GM12878 (cell line): ENCODE measurements at regions of chr12 and their contacts with region 1.

Region 1: GRCh38 chr12:130838951-130839769 is at the start of gene STX2:
- DNase-seq: peak; percentile 30
- ATAC-seq: peak; percentile 92
- H3K4me3 ChIP-seq: peak within 1 kb of the TSS; percentile 87
- H3K27ac ChIP-seq: no peak within 1 kb of the TSS; the same call in 1 of the 2 replicates
- H3K4me1 ChIP-seq: peaks cover 5% of the 10 kb centered on the region
- H3K27me3 ChIP-seq: no peaks in the 10 kb centered on the region
- CTCF ChIP-seq: no peak
- EP300 ChIP-seq: no peak
- POLR2A ChIP-seq: no peak
- RAD21 ChIP-seq: no peak
- polyA plus RNA-seq, gene STX2: 6.0 to 7.8 TPM

Region 2: DNA sequence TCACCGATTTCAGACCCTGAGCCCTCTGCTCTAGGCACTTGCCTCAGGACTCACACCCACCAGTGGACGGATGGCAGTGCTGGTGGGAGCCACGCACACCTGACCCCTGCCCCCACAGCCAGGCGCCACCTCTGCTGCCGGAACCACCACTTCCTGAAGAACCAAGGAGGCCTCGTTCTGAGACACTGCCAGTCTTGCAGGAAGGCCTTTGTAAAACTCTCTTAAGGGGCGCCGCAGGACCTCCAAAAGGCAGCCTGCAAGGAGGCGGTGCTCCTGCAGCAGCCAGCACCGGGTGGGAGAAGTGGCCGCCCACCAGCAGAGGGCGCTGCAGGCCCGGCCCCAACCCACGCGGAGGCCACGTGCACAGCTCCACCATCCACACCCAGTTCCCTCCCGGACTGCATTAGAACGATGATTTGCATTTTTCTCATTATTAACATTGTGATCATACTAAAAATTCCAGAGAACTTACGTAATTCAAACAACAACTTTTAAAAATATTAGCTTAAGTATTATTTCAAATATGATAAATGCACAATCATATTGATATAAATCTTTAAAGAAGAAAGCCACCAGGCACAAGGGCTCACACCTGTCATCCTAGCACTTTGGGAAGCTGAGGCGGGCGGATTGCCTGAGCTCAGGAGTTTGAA is 12.9 kb before region 1 on chr12:
- CTCF ChIA-PET with region 1: interaction called, 33 read pairs
- POLR2A ChIA-PET with region 1: no interaction called
- RAD21 ChIA-PET with region 1: no interaction called
- SMC1A ChIA-PET with region 1: interaction called, 4 read pairs
- in situ Hi-C with region 1: no loop called
- intact Hi-C with region 1: no loop called
- DNase-seq: no peak
- ATAC-seq: peak; percentile 95
- H3K4me3 ChIP-seq: no peak overlapping the region
- H3K27ac ChIP-seq: no peak overlapping the region
- H3K4me1 ChIP-seq: no peaks in the 10 kb centered on the region; the same call in 1 of the 2 replicates
- H3K27me3 ChIP-seq: no peaks in the 10 kb centered on the region
- CTCF ChIP-seq: peak; percentile 49 to 81 (median 69)
- EP300 ChIP-seq: no peak
- POLR2A ChIP-seq: no peak
- RAD21 ChIP-seq: peak; percentile 37; the same call in 1 of the 2 replicates

Region 3: DNA sequence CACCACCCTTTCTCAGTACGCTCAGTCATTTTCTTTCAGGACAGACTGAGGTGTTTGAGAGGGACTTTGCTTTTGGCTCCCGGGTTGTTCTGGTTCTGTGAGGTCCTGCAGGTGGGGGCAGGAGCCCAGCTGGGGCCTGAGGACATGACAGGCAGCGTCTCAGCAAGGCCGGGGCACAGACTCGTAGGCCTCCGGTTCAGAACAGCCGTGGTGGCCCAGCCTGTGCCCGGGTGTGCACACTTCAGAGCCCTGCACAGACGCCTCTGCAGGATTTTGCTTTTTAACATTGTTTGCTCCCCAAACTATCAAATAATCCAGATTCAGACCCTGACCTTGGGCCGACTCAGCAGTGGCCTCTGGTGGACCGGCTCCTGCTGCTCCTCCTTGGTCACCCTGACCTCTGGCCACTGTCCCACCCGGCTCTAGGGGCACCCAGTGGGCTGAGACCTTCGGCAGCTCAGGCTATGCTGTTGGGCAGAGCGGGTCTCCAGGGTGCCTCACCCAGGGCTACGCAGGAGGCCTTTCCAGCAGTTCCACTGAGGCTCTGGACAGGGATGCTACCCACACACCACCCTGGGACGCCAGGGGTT is 179.7 kb after region 1 on chr12:
- CTCF ChIA-PET with region 1: no interaction called
- POLR2A ChIA-PET with region 1: no interaction called
- RAD21 ChIA-PET with region 1: no interaction called
- SMC1A ChIA-PET with region 1: no interaction called
- in situ Hi-C with region 1: no loop called
- intact Hi-C with region 1: no loop called
- DNase-seq: no peak
- ATAC-seq: no peak; the same call in 2 of the 3 replicates
- H3K4me3 ChIP-seq: no peak overlapping the region
- H3K27ac ChIP-seq: no peak overlapping the region
- H3K4me1 ChIP-seq: no peaks in the 10 kb centered on the region
- H3K27me3 ChIP-seq: no peaks in the 10 kb centered on the region
- CTCF ChIP-seq: no peak
- EP300 ChIP-seq: no peak
- POLR2A ChIP-seq: no peak
- RAD21 ChIP-seq: no peak

Region 4: GRCh38 chr12:131276501-131277185 is 437.5 kb after region 1 on chr12:
- CTCF ChIA-PET with region 1: no interaction called
- POLR2A ChIA-PET with region 1: no interaction called
- RAD21 ChIA-PET with region 1: no interaction called
- SMC1A ChIA-PET with region 1: no interaction called
- in situ Hi-C with region 1: no loop called
- intact Hi-C with region 1: no loop called
- DNase-seq: no peak
- ATAC-seq: no peak
- H3K4me3 ChIP-seq: no peak overlapping the region
- H3K27ac ChIP-seq: no peak overlapping the region
- H3K4me1 ChIP-seq: no peaks in the 10 kb centered on the region
- H3K27me3 ChIP-seq: peaks cover 0 to 1% of the 10 kb centered on the region in 2 experiments; a peak in 2 of 4 replicates
- CTCF ChIP-seq: no peak
- EP300 ChIP-seq: no peak
- POLR2A ChIP-seq: no peak
- RAD21 ChIP-seq: no peak